A673 (cell line): ENCODE measurements at regions of chr18 and their contacts with region 1.

Region 1: GRCh38 chr18:5057386-5058348 is 139.4 kb downstream of the AKAIN1 start:
- DNase-seq: peak; percentile 85
- H3K4me3 ChIP-seq: no peak overlapping the region
- H3K27ac ChIP-seq: no peak overlapping the region
- H3K4me1 ChIP-seq: peaks cover 20% of the 10 kb centered on the region
- H3K27me3 ChIP-seq: no peaks in the 10 kb centered on the region
- CTCF ChIP-seq: peak; percentile 83

Region 2: DNA sequence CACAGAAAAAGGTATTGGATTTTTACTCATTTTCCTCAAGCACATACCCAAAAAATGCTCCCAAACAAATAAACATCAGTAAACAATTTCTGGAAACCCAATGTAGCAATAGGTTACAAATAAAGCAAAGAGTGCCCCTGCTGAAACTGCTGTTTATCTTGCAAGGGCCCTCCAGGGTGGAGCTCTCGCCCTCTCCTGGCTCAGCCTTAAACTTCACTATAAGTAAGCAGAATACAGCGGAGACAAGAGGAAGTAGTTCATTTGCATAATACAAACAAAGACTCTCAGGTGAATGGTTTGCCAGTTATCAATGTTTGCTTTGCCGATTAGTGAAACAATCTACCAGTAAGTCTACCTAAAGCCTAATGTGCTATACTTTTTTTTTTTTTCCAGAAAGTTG is 1040.2 kb before region 1 on chr18:
- CTCF ChIA-PET with region 1: no interaction called
- POLR2A ChIA-PET with region 1: no interaction called
- intact Hi-C with region 1: loop called (anchors 5 kb)
- DNase-seq: peak; percentile 75
- H3K4me3 ChIP-seq: no peak overlapping the region
- H3K27ac ChIP-seq: no peak overlapping the region
- H3K4me1 ChIP-seq: peaks cover 3% of the 10 kb centered on the region
- H3K27me3 ChIP-seq: no peaks in the 10 kb centered on the region
- CTCF ChIP-seq: peak; percentile 74

Region 3: DNA sequence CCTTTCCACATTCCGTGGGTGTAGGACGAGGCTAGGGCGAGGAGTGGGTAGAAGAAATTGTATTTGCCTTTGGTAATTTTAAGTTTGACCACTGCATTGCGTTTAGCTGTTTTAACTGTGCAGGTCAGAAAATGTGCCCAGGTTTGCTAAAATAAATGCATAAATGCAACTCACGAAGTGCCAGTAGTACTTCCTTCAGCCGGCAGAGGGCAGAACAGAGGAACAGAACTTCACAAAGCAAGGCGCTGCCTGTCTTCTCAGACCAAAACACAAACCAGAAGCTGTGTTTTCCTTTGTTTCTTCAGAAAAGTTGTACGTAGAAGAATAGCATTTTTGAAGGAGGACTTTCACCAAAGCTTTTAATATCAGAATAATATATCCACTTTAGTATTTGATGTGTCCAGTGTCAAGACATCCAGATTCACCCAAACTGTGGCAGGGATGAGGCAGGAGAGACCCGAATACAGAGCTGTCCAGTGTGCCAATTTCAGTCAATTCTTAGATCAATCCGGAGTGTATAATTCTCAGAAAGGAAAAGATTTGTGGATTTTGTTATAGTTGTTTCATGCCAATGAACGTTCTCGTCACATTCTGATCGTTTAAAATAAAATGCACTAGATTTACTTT is 951.1 kb before region 1 on chr18:
- CTCF ChIA-PET with region 1: interaction called, 7 read pairs
- POLR2A ChIA-PET with region 1: no interaction called
- intact Hi-C with region 1: loop called (anchors 2 kb)
- DNase-seq: peak; percentile 87
- H3K4me3 ChIP-seq: no peak overlapping the region
- H3K27ac ChIP-seq: no peak overlapping the region
- H3K4me1 ChIP-seq: peaks cover 10% of the 10 kb centered on the region
- H3K27me3 ChIP-seq: no peaks in the 10 kb centered on the region
- CTCF ChIP-seq: peak; percentile 92

Region 4: GRCh38 chr18:4765401-4765800 is 292.3 kb before region 1 on chr18:
- CTCF ChIA-PET with region 1: no interaction called
- POLR2A ChIA-PET with region 1: no interaction called
- intact Hi-C with region 1: loop called (anchors 10 kb)
- DNase-seq: no peak
- H3K4me3 ChIP-seq: no peak overlapping the region
- H3K27ac ChIP-seq: no peak overlapping the region
- H3K4me1 ChIP-seq: no peaks in the 10 kb centered on the region
- H3K27me3 ChIP-seq: peaks cover 8% of the 10 kb centered on the region
- CTCF ChIP-seq: peak; percentile 24; the same call in 1 of the 2 replicates